MCF 10A (cell line): ENCODE measurements at regions of chr4 and their contacts with region 1.

Region 1: GRCh38 chr4:140861359-140862176 is 105.4 kb upstream of the TBC1D9 start:
- DNase-seq: peak; percentile 80
- H3K4me3 Mint-ChIP-seq: no peak overlapping the region
- H3K27ac Mint-ChIP-seq: no peak overlapping the region
- H3K4me1 Mint-ChIP-seq: peaks cover 8% of the 10 kb centered on the region
- H3K27me3 Mint-ChIP-seq: no peaks in the 10 kb centered on the region
- CTCF ChIP-seq: peak; percentile 60

Region 2: GRCh38 chr4:140816806-140817510 is 44.6 kb before region 1 on chr4:
- CTCF ChIA-PET with region 1: no interaction called
- POLR2A ChIA-PET with region 1: no interaction called
- intact Hi-C with region 1: no loop called
- DNase-seq: no peak
- H3K4me3 Mint-ChIP-seq: no peak overlapping the region
- H3K27ac Mint-ChIP-seq: no peak overlapping the region
- H3K4me1 Mint-ChIP-seq: peaks cover 4% of the 10 kb centered on the region
- H3K27me3 Mint-ChIP-seq: no peaks in the 10 kb centered on the region
- CTCF ChIP-seq: no peak

Region 3: GRCh38 chr4:140884431-140885058 is 23.0 kb after region 1 on chr4:
- CTCF ChIA-PET with region 1: interaction called, 21 read pairs
- POLR2A ChIA-PET with region 1: interaction called, 4 read pairs
- intact Hi-C with region 1: loop called (anchors 1 kb)
- DNase-seq: peak; percentile 80
- H3K4me3 Mint-ChIP-seq: no peak overlapping the region
- H3K27ac Mint-ChIP-seq: no peak overlapping the region
- H3K4me1 Mint-ChIP-seq: no peaks in the 10 kb centered on the region
- H3K27me3 Mint-ChIP-seq: peaks cover 14% of the 10 kb centered on the region
- CTCF ChIP-seq: peak; percentile 75

Region 4: DNA sequence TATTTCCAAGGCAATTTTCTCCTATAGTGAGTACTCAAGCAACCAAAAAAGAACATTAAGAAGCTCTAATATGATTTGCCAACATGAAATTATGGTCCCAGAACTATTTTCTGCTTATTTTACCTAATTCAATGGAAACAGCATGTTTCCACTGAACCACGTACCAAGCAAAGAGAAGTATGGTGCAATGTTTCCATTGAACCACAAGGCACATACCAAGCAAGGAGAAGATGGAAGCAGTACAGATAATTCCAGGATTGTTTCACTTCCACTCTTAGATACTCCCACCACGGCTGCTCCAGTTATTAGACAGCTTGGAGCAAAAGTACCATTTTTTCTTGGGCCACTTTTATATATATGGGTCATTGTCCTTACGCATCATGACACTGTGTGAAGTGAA is 106.8 kb after region 1 on chr4:
- CTCF ChIA-PET with region 1: interaction called, 4 read pairs
- POLR2A ChIA-PET with region 1: no interaction called
- intact Hi-C with region 1: loop called (anchors 10 kb)
- DNase-seq: no peak
- H3K4me3 Mint-ChIP-seq: no peak overlapping the region
- H3K27ac Mint-ChIP-seq: no peak overlapping the region
- H3K4me1 Mint-ChIP-seq: no peaks in the 10 kb centered on the region
- H3K27me3 Mint-ChIP-seq: no peaks in the 10 kb centered on the region
- CTCF ChIP-seq: no peak

Region 5: GRCh38 chr4:141174457-141174856 is 312.9 kb after region 1 on chr4:
- CTCF ChIA-PET with region 1: no interaction called
- POLR2A ChIA-PET with region 1: no interaction called
- intact Hi-C with region 1: no loop called
- DNase-seq: no peak
- H3K4me3 Mint-ChIP-seq: no peak overlapping the region
- H3K27ac Mint-ChIP-seq: no peak overlapping the region
- H3K4me1 Mint-ChIP-seq: no peaks in the 10 kb centered on the region
- H3K27me3 Mint-ChIP-seq: no peaks in the 10 kb centered on the region
- CTCF ChIP-seq: no peak

Region 6: GRCh38 chr4:141195095-141195707 is 333.6 kb after region 1 on chr4:
- CTCF ChIA-PET with region 1: no interaction called
- POLR2A ChIA-PET with region 1: no interaction called
- intact Hi-C with region 1: no loop called
- DNase-seq: no peak
- H3K4me3 Mint-ChIP-seq: no peak overlapping the region
- H3K27ac Mint-ChIP-seq: no peak overlapping the region
- H3K4me1 Mint-ChIP-seq: no peaks in the 10 kb centered on the region
- H3K27me3 Mint-ChIP-seq: no peaks in the 10 kb centered on the region
- CTCF ChIP-seq: no peak

Region 7: GRCh38 chr4:141220655-141221605 is 359.4 kb after region 1 on chr4 and contains the start of gene ZNF330:
- CTCF ChIA-PET with region 1: no interaction called
- POLR2A ChIA-PET with region 1: no interaction called
- intact Hi-C with region 1: loop called (anchors 2 kb)
- DNase-seq: peak; percentile 91
- H3K4me3 Mint-ChIP-seq: peak within 1 kb of the TSS; percentile 94
- H3K27ac Mint-ChIP-seq: peak within 1 kb of the TSS; percentile 96
- H3K4me1 Mint-ChIP-seq: peaks cover 21% of the 10 kb centered on the region
- H3K27me3 Mint-ChIP-seq: no peaks in the 10 kb centered on the region
- CTCF ChIP-seq: no peak
- total RNA-seq, gene ZNF330: 34.1 and 39.1 TPM in 2 replicates

Region 8: DNA sequence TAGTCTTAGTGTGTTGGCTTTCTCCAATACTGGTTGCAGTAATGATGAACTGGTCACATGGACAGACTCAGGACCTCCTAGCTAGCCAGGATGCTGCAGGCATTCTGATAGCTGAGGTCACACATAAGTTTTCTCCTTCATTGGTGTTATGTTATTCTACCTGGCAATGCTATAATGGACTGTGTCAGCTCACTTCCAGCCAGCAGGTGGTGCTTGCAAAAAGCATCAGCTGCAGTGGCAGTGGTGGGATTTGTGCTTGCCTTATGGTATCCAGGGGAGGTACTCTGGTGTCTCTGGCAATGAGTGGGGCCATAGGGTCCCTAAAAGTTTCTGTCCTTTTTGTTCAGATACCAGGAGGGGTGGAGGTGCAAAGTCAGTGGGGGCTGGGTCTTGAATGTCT is 392.8 kb after region 1 on chr4:
- CTCF ChIA-PET with region 1: no interaction called
- POLR2A ChIA-PET with region 1: no interaction called
- intact Hi-C with region 1: no loop called
- DNase-seq: no peak
- H3K4me3 Mint-ChIP-seq: no peak overlapping the region
- H3K27ac Mint-ChIP-seq: no peak overlapping the region
- H3K4me1 Mint-ChIP-seq: no peaks in the 10 kb centered on the region
- H3K27me3 Mint-ChIP-seq: no peaks in the 10 kb centered on the region
- CTCF ChIP-seq: no peak